ENCODE measurements at regions of chr10 and their contacts with region 1.

Region 1: GRCh38 chr10:114486938-114487814 is 82.9 kb upstream of the AFAP1L2 start:
- DNase-seq: peak; percentile 86
- H3K4me3 ChIP-seq: no peak overlapping the region
- H3K27ac ChIP-seq: peak overlapping the region; percentile 19
- H3K4me1 ChIP-seq: peaks cover 25% of the 10 kb centered on the region
- H3K27me3 ChIP-seq: no peaks in the 10 kb centered on the region
- CTCF ChIP-seq: no peak
- POLR2A ChIP-seq: no peak

Region 2: GRCh38 chr10:114297136-114297705 is 190.0 kb before region 1 on chr10:
- CTCF ChIA-PET with region 1: no interaction called
- POLR2A ChIA-PET with region 1: no interaction called
- dilution Hi-C with region 1: no loop called
- intact Hi-C with region 1: no loop called
- DNase-seq: no peak
- H3K4me3 ChIP-seq: no peak overlapping the region
- H3K27ac ChIP-seq: no peak overlapping the region
- H3K4me1 ChIP-seq: no peaks in the 10 kb centered on the region
- H3K27me3 ChIP-seq: peaks cover 0 to 5% of the 10 kb centered on the region in 2 experiments
- CTCF ChIP-seq: no peak
- POLR2A ChIP-seq: no peak

Region 3: DNA sequence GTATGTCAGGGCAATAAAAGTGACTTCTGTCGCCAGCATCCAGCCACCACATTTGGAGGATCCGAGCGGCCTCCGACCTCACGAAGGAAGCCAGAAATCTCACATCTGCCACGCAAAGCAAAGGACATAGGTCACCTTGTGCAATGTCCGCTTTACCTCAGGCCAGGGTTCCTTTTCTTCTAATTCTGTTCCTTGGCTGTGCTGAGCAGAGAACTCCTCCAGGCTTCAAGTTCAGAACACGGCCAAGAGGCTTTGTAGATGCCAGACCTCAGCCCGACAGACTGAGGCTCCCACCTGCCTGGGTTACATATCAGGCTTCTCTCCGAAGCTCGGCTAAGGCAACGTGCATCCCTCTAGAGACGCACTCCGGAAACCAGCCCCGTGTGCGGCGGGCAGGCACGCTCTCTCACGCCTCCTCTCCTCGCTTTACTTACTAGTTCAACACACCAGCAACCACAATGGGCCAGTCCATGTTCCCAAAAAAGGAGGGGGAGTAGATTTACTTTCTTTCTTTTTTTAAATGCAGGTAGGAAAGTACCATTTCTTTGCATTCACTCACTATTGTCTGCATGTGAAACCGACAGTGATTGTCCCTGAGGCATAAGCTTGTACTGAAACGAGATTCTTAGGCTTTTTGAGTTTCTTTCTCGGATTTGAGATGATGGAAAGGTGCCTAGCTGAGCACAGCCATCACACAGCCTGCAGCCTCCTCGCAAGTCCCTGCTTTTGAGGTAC is 39.5 kb after region 1 on chr10:
- CTCF ChIA-PET with region 1: interaction called, 12 read pairs
- POLR2A ChIA-PET with region 1: no interaction called
- dilution Hi-C with region 1: no loop called
- intact Hi-C with region 1: loop called (anchors 2 kb)
- DNase-seq: peak; percentile 97
- H3K4me3 ChIP-seq: peak overlapping the region in 2 of 3 experiments; percentile 38 to 41
- H3K27ac ChIP-seq: peak overlapping the region; percentile 35
- H3K4me1 ChIP-seq: peaks cover 18% of the 10 kb centered on the region
- H3K27me3 ChIP-seq: no peaks in the 10 kb centered on the region
- CTCF ChIP-seq: no peak
- POLR2A ChIP-seq: peak; percentile 69

Measured in endothelial cell of umbilical vein (primary cell).